HEK293 (cell line): ENCODE measurements at regions of chr1 and their contacts with region 1.

Region 1: DNA sequence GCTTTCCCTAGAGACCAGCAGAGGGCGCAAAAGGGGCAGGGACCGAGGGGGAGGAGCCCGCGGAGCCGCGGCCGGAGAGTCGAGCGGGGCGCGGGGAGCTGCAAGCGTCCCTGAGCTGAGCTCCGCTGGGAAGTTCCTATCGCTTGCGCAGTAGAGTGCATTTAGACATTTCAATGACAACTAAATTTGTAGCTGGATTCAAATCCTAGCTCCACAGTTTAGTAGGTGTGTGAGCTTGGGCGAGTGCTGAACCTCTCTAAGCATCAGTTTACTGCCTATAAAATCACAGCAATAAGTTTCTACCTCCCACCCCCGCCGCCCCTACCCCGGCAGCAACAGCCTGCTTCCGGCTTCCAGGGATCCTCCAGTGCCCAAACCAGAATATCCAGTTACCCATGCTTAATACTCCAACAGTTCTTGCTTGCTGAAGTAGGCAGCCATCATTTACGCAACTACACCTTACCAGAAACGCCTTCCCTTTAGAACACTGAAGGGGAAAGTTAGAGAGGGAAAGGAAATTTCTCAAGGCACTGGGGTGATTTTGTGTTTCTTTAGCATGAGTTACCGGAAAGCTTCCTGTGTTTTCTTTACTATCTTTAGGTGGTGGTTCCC is 9.1 kb downstream of the TLR5 start:
- H3K4me3 ChIP-seq: peak overlapping the region; percentile 38
- H3K27ac ChIP-seq: no peak overlapping the region
- H3K4me1 ChIP-seq: peaks cover 3% of the 10 kb centered on the region; the same call in 1 of the 2 replicates
- CTCF ChIP-seq: peak; percentile 99

Region 2: GRCh38 chr1:223114871-223115270 is 19.1 kb before region 1 on chr1:
- CTCF ChIA-PET with region 1: interaction called, 147 read pairs
- POLR2A ChIA-PET with region 1: interaction called, 3 read pairs
- H3K4me3 ChIP-seq: no peak overlapping the region
- H3K27ac ChIP-seq: no peak overlapping the region
- H3K4me1 ChIP-seq: no peaks in the 10 kb centered on the region
- CTCF ChIP-seq: no peak

Region 3: GRCh38 chr1:223161321-223161720 is 27.4 kb after region 1 on chr1:
- CTCF ChIA-PET with region 1: interaction called, 12 read pairs
- POLR2A ChIA-PET with region 1: no interaction called
- H3K4me3 ChIP-seq: no peak overlapping the region
- H3K27ac ChIP-seq: no peak overlapping the region
- H3K4me1 ChIP-seq: no peaks in the 10 kb centered on the region
- CTCF ChIP-seq: no peak

Region 4: GRCh38 chr1:223531742-223532341 is 397.9 kb after region 1 on chr1:
- CTCF ChIA-PET with region 1: interaction called, 10 read pairs
- POLR2A ChIA-PET with region 1: no interaction called
- H3K4me3 ChIP-seq: no peak overlapping the region
- H3K27ac ChIP-seq: no peak overlapping the region
- H3K4me1 ChIP-seq: no peaks in the 10 kb centered on the region
- CTCF ChIP-seq: peak; percentile 76; the same call in 1 of the 2 replicates

Region 5: GRCh38 chr1:223670458-223671168 is 536.7 kb after region 1 on chr1:
- CTCF ChIA-PET with region 1: interaction called, 10 read pairs
- POLR2A ChIA-PET with region 1: no interaction called
- H3K4me3 ChIP-seq: no peak overlapping the region
- H3K27ac ChIP-seq: no peak overlapping the region
- H3K4me1 ChIP-seq: no peaks in the 10 kb centered on the region
- CTCF ChIP-seq: peak; percentile 44; the same call in 1 of the 2 replicates